ENCODE measurements at regions of chr5 and their contacts with region 1.

Region 1: GRCh38 chr5:141650851-141651727 is at the start of gene FCHSD1:
- DNase-seq: peak; percentile 91
- ATAC-seq: peak; percentile 95
- H3K4me3 Mint-ChIP-seq: peak within 1 kb of the TSS; percentile 84
- H3K27ac Mint-ChIP-seq: peak within 1 kb of the TSS; percentile 94
- H3K4me1 Mint-ChIP-seq: peaks cover 20% of the 10 kb centered on the region
- H3K27me3 Mint-ChIP-seq: no peaks in the 10 kb centered on the region
- total RNA-seq, gene FCHSD1: 28.2 to 32.9 TPM

Region 2: GRCh38 chr5:141636413-141637122 is 14.5 kb before region 1 on chr5 and contains the starts of genes HDAC3 and RELL2:
- CTCF ChIA-PET with region 1: interaction called, 14 read pairs
- POLR2A ChIA-PET with region 1: interaction called, 12 read pairs
- intact Hi-C with region 1: loop called (anchors 1 kb)
- DNase-seq: peak; percentile 97
- ATAC-seq: peak; percentile 82
- H3K4me3 Mint-ChIP-seq: peak within 1 kb of the TSS; percentile 92
- H3K27ac Mint-ChIP-seq: peak within 1 kb of the TSS; percentile 92
- H3K4me1 Mint-ChIP-seq: peaks cover 45% of the 10 kb centered on the region
- H3K27me3 Mint-ChIP-seq: no peaks in the 10 kb centered on the region
- total RNA-seq, gene HDAC3: 85.9 to 88.6 TPM
- total RNA-seq, gene RELL2: 24.3 to 27.8 TPM

Region 3: DNA sequence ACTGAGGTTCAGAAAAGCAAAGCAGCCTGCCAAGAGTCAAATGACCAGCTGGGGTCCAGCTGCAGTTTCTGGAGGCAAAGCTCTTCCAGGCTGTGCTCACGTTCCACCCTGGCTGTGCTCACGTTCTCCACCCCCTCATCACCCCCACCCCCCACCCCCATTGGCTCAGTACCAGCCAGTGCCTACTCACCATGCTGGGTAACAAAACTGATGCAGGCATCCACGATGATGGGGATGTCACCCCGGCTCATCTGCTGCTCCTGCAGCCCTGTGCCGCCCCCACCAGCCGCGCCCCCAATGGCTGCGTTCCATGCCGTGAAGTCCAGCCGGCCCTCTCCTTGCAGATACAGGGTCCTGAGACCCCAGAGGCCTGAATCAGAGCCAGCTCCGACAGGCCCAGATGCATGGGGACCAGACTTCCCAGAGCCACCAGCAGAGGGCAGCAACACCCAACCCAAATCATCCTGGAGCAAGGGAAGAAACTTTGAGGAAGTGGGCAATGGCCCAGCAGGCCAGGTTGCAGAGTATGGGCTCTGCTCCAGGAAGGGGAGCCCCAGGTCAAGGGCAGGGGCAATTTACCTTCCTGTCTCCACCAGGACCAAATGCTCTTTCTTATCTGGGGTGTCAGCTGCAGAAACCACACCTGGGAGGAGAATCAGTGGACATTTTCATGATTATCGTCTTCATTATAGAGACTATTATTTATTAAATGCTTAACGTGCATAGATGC is 13.8 kb after region 1 on chr5:
- CTCF ChIA-PET with region 1: interaction called, 10 read pairs
- POLR2A ChIA-PET with region 1: no interaction called
- intact Hi-C with region 1: no loop called
- DNase-seq: peak; percentile 86
- ATAC-seq: peak; percentile 97
- H3K4me3 Mint-ChIP-seq: no peak overlapping the region
- H3K27ac Mint-ChIP-seq: no peak overlapping the region
- H3K4me1 Mint-ChIP-seq: peaks cover 4% of the 10 kb centered on the region
- H3K27me3 Mint-ChIP-seq: no peaks in the 10 kb centered on the region

Region 4: DNA sequence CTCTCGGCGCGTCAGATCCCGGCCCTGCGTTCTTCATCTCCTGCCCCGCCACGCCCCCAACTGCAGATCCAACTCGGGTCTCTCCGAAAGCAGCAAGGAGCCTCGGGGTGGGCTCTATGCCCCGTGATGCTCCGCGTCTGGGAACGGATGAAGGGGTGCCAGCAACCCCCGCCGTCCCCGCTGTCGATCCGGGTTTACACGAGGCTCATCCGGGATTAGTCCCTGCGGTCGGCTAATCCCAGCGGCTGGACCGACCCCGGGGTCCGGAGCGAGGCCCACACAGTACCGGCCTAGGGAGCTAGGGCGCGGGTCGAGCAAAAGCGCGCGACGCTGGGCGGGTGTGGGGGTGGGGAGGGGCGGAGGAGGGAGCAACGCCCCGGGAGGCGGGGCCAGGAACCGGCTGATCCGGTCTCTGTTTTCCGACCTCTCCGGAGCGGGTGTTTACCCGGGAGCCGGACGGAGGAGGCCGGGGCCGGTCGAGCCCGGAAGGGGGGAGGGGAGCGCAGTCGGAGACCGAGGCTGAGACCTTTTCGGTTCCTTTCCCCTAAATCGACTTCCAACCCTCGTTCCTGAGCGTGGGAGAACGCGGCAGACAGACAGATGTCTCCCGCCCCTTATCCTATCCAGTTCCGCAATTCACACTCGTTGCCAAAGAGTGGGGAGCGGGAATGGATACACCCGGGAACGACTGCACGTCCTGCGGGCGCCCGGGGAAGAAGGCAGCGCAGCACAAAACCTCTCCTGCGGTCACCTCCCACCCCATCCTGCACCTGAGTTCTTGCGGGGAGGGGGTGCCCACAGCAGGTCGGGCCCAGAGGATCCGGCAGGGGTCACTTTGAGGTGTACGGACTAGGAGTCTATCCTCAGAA is 198.5 kb after region 1 on chr5:
- CTCF ChIA-PET with region 1: no interaction called
- POLR2A ChIA-PET with region 1: no interaction called
- intact Hi-C with region 1: loop called in 1 of 2 experiments (anchors 1 kb)
- DNase-seq: peak; percentile 87
- ATAC-seq: peak; percentile 80
- H3K4me3 Mint-ChIP-seq: peak overlapping the region; percentile 78
- H3K27ac Mint-ChIP-seq: peak overlapping the region; percentile 86
- H3K4me1 Mint-ChIP-seq: peaks cover 15% of the 10 kb centered on the region
- H3K27me3 Mint-ChIP-seq: peaks cover 2% of the 10 kb centered on the region

Measured in activated CD4-positive, alpha-beta T cell treated with anti-CD3 and anti-CD28 coated beads for 36 hours (primary cell).